ENCODE measurements at regions of chr6 and their contacts with region 1.

Region 1: GRCh38 chr6:99603421-99604165 is 3.0 kb upstream of the PRDM13 start:
- DNase-seq: no peak
- H3K4me3 Mint-ChIP-seq: peak overlapping the region; percentile 42
- H3K27ac Mint-ChIP-seq: no peak overlapping the region
- H3K4me1 Mint-ChIP-seq: peaks cover 23% of the 10 kb centered on the region
- H3K27me3 Mint-ChIP-seq: peaks cover 87% of the 10 kb centered on the region

Region 2: DNA sequence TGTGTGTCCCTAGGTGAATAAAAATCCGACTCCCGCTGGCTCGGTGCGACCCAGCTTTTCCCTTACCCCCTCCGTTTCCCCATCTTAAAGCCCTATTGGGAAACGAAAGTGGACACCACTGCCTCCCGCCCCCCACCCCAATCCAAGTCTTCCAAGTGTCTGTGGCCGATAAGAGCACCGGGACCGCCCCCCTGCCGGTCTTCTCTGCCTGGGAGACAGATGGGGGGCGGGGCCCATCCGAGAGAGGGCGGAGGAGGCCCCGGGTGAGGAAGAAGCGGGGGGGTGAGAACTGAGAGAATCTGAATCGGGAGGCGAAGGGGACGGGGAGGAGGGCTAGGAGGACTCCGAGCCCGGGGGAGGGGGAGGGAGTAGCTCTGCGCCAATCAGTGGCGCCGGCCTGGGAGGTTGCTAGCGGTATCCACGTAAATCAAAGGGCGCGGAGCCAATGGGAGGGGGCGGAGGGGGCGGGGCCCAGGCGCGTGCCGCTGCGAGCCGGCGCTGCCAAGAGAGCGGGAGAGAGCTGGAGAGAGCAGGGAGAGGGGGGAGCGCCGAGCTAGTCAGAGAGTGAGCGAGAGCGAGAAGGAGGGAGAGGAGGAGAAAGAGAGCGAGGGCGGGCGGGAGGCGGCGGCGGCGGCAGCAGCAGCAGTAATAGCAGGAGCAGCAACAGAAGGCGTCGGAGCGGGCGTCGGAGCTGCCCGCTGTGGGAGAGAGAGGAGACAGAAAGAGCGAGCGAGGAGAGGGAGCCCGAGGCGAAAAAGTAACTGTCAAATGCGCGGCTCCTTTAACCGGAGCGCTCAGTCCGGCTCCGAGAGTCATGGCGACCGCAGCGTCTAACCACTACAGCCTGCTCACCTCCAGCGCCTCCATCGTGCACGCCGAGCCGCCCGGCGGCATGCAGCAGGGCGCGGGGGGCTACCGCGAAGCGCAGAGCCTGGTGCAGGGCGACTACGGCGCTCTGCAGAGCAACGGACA is 769.2 kb before region 1 on chr6 and contains the start of gene POU3F2:
- intact Hi-C with region 1: loop called (anchors 2 kb)
- DNase-seq: peak; percentile 38
- H3K4me3 Mint-ChIP-seq: peak within 1 kb of the TSS; percentile 77
- H3K27ac Mint-ChIP-seq: no peak within 1 kb of the TSS
- H3K4me1 Mint-ChIP-seq: peaks cover 30% of the 10 kb centered on the region
- H3K27me3 Mint-ChIP-seq: peaks cover 76% of the 10 kb centered on the region
- total RNA-seq, gene POU3F2: not detected in 2 replicates

Region 3: DNA sequence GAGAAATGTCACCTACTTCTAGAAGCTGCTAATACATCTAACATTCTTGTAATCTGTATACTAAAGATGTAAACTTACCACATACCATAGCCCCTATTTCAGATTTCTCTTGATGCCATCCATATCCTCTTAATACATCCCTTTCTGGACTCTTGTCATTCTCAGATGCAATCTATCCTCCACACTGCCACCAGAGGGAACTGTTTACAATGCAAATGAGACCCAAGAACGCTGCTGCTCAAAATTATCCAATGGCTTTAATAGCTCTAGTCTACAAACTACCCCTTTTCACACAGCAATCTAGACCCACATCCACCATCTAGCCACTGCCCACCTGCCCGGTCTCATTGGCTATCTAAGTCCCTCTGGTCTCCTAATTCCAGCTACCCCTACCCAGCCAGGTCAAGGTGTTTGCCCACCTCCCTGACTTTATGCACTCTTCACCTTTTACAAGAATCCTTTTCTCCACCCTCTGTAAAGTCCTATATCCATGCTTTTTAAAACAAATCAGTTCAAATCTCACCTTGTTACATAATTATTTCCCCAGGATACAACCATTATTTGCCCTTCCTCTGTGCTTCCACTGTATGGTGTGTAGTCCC is 269.0 kb before region 1 on chr6:
- intact Hi-C with region 1: no loop called
- DNase-seq: no peak
- H3K4me3 Mint-ChIP-seq: no peak overlapping the region
- H3K27ac Mint-ChIP-seq: no peak overlapping the region
- H3K4me1 Mint-ChIP-seq: peaks cover 5% of the 10 kb centered on the region
- H3K27me3 Mint-ChIP-seq: peaks cover 22% of the 10 kb centered on the region

Region 4: GRCh38 chr6:99467509-99468106 is 136.0 kb before region 1 on chr6:
- intact Hi-C with region 1: loop called (anchors 5 kb)
- DNase-seq: no peak
- H3K4me3 Mint-ChIP-seq: no peak overlapping the region
- H3K27ac Mint-ChIP-seq: no peak overlapping the region
- H3K4me1 Mint-ChIP-seq: no peaks in the 10 kb centered on the region
- H3K27me3 Mint-ChIP-seq: no peaks in the 10 kb centered on the region

Region 5: GRCh38 chr6:100464903-100465700 is 861.5 kb after region 1 on chr6 and contains the start of gene SIM1:
- intact Hi-C with region 1: loop called (anchors 2 kb)
- DNase-seq: no peak
- H3K4me3 Mint-ChIP-seq: no peak within 1 kb of the TSS
- H3K27ac Mint-ChIP-seq: no peak within 1 kb of the TSS
- H3K4me1 Mint-ChIP-seq: peaks cover 25% of the 10 kb centered on the region
- H3K27me3 Mint-ChIP-seq: peaks cover 89% of the 10 kb centered on the region
- total RNA-seq, gene SIM1: 0.02 TPM in 1 of 2 replicates, not detected in the other

Measured in activated T-helper 2 cell treated with anti-CD3 and anti-CD28 coated beads, Interferon-gamma antibody, Interleukin-2, Interleukin-4, amounts not matched to agents 10 μg/mL and 5 μg/mL and 100 μg/mL, durations not matched to agents 14 hours and 24 hours and 36 hours (primary cell).